ENCODE measurements at regions of chr1 and their contacts with region 1.

Region 1: DNA sequence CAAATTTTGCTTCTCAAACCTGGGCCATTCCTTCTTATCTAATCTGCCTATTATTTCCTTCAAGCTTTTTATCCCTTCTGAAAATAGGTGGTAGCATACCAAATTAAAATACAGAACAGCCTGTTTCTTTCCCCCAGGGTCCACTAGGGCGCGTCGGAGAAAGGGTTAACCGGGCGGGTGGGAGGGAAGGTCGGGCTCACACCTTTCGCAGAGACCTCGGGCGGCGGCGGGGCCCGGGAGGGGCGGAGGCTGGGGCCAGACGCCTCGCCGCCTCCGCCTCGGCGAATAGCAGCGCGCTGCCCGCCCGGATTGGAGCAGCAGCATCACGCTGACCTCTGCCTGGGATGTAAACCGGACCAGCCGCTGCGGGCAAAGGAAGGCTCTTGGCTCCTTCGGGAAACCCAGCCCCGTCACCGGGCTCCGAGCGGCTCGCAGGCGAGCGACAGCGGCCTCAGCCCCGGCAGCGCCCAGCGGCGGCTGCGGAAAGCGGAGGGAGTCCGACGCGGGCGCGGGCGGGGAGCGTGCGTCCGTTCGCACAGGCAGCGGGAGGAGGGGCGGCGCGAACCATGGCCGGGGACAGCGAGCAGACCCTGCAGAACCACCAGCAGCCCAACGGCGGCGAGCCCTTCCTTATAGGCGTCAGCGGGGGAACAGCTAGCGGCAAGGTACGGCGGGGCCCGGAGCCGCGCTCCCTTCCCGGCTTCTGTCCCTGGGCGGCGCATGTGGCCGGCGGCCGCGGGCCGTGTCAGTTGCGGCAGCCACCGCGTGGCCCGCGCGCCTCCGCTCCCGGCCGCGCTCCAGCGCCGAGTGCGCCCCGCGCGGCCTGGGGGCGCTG is at the start of gene UCK2:
- DNase-seq: peak in 7 of 9 donors; percentile 14 to 77 (median 27)
- ATAC-seq: peak; percentile 81
- H3K4me3 ChIP-seq: peak within 1 kb of the TSS; percentile 77
- H3K4me3 Mint-ChIP-seq: peak within 1 kb of the TSS; percentile 85 to 95 (median 92)
- H3K27ac ChIP-seq: peak within 1 kb of the TSS; percentile 42
- H3K27ac Mint-ChIP-seq: peak within 1 kb of the TSS in 7 of 9 donors; percentile 2 to 85 (median 60)
- H3K4me1 ChIP-seq: peaks cover 9 to 12% of the 10 kb centered on the region in 2 donors
- H3K4me1 Mint-ChIP-seq: peaks cover 0 to 27% (median 19%) of the 10 kb centered on the region in 7 donors
- H3K27me3 ChIP-seq: no peaks in the 10 kb centered on the region
- H3K27me3 Mint-ChIP-seq: peaks cover under 1 to 23% (median 9%) of the 10 kb centered on the region in 5 donors
- total RNA-seq, gene UCK2: 0.89 to 32.7 (median 1.2) TPM

Region 2: GRCh38 chr1:165768513-165769394 is 58.7 kb before region 1 on chr1 and contains the start of gene TMCO1:
- CTCF ChIA-PET with region 1: no interaction called
- POLR2A ChIA-PET with region 1: interaction called, 10 read pairs
- intact Hi-C with region 1: loop called (anchors 1 kb)
- DNase-seq: peak; percentile 76 to 97 (median 94)
- ATAC-seq: peak; percentile 98
- H3K4me3 ChIP-seq: peak within 1 kb of the TSS; percentile 94
- H3K4me3 Mint-ChIP-seq: peak within 1 kb of the TSS; percentile 90 to 100 (median 97)
- H3K27ac ChIP-seq: peak within 1 kb of the TSS; percentile 85
- H3K27ac Mint-ChIP-seq: peak within 1 kb of the TSS; percentile 91 to 100 (median 98)
- H3K4me1 ChIP-seq: peaks cover 19 to 32% of the 10 kb centered on the region in 2 donors
- H3K4me1 Mint-ChIP-seq: peaks cover 44 to 83% (median 68%) of the 10 kb centered on the region in 7 donors
- H3K27me3 ChIP-seq: no peaks in the 10 kb centered on the region
- H3K27me3 Mint-ChIP-seq: no peaks in the 10 kb centered on the region
- total RNA-seq, gene TMCO1: 30.4 to 97.1 (median 49.8) TPM

Region 3: DNA sequence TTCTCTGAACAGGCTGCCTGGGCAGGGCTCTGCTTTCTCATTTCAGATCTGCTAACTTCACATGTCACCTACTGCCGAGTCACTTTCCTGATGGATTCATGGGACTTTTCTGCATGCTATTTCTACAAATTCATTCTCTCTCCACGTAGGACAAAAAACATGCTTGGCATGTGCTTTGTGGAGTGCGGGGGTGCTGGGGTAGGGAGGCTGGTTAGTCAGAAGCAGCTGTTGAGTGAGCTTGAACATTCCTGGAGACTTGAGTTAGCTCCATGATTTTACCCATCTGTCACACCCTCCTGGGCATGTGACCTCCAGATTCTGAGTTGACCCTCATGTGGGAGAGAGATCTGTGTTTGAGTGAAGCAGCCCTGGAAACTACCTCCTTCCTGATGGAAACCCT is 71.4 kb after region 1 on chr1:
- CTCF ChIA-PET with region 1: no interaction called
- POLR2A ChIA-PET with region 1: no interaction called
- intact Hi-C with region 1: no loop called
- DNase-seq: no peak
- ATAC-seq: no peak
- H3K4me3 ChIP-seq: no peak overlapping the region
- H3K4me3 Mint-ChIP-seq: no peak overlapping the region
- H3K27ac ChIP-seq: no peak overlapping the region
- H3K27ac Mint-ChIP-seq: no peak overlapping the region
- H3K4me1 ChIP-seq: no peaks in the 10 kb centered on the region
- H3K4me1 Mint-ChIP-seq: peaks cover 0 to 19% (median 6%) of the 10 kb centered on the region in 7 donors
- H3K27me3 ChIP-seq: no peaks in the 10 kb centered on the region
- H3K27me3 Mint-ChIP-seq: no peaks in the 10 kb centered on the region

Measured in naive thymus-derived CD4-positive, alpha-beta T cell (primary cell).